Cardiac septum (tissue), 1 donor: ENCODE measurements at regions of chr7 and their contacts with region 1.

Region 1: GRCh38 chr7:29806208-29806994 is at the start of gene WIPF3:
- DNase-seq: no peak
- total RNA-seq, gene WIPF3: 11.6 TPM

Region 2: DNA sequence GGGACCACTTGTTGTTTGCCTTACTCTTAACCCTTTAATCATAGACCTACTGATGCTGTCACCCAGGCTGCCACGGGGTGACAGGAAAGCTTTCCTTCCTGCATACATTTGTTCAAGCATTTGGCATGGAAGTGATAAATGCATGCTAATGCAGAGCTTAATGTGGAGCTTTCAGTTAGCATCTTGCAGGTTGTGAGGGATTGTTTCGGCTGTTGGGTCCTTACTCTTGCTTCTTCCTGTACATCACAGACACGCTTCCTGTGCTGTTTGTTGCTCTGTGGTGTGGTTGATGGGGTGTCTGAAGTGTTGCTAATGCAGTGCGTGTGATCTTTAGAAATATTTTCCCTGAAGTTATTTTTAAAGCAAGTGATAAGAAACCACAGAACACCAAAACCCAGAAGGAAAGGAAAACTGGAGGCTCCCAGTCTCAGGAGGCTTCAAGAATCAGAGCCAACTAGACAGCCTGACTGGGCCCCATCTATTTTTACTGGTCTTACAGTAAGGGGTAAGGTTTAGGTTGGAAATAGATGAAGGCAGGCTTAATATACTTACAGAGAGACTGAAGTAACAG is 468.8 kb before region 1 on chr7:
- intact Hi-C with region 1: no loop called
- DNase-seq: no peak

Region 3: DNA sequence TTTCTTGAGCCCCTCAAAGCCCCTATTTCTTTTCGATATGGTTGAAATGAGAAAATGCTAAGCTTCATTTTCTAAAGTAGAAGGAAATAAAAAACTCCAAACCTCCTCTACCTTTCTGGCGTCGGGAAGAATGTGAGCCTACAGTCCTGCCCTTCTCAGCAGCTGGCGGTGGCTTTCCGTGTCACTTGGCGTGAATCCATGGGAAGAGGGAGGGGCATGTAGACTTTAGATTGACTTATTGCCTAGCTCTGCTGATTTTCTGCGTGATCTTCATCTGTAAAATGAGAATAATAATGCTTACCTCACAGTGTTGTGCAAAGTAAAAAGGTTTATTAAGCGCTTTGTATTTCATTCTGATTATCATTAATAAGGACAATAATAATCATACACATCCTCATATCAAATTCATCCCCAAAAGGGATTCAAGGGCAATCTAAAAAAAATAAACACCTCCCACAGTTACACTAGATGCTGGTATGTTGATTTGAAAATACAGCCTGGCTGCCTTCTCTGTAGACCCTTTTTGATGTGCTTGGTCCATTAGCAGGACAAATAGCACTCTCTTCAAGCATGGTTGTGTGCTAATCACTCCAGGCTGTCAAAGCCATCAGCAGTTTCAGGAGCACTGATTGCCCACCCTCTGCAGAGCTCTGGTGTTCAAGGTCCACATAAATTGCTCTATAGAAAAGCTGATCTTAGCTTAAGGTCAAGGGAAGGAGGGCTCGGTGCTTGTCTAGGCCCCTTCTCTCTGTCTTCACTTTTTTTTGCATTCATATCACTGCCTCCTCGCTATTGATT is 207.6 kb before region 1 on chr7:
- intact Hi-C with region 1: no loop called
- DNase-seq: no peak

Region 4: GRCh38 chr7:29764227-29764626 is 42.2 kb before region 1 on chr7:
- intact Hi-C with region 1: no loop called
- DNase-seq: no peak

Region 5: GRCh38 chr7:29843093-29843492 is 36.7 kb after region 1 on chr7:
- intact Hi-C with region 1: no loop called
- DNase-seq: no peak

Region 6: DNA sequence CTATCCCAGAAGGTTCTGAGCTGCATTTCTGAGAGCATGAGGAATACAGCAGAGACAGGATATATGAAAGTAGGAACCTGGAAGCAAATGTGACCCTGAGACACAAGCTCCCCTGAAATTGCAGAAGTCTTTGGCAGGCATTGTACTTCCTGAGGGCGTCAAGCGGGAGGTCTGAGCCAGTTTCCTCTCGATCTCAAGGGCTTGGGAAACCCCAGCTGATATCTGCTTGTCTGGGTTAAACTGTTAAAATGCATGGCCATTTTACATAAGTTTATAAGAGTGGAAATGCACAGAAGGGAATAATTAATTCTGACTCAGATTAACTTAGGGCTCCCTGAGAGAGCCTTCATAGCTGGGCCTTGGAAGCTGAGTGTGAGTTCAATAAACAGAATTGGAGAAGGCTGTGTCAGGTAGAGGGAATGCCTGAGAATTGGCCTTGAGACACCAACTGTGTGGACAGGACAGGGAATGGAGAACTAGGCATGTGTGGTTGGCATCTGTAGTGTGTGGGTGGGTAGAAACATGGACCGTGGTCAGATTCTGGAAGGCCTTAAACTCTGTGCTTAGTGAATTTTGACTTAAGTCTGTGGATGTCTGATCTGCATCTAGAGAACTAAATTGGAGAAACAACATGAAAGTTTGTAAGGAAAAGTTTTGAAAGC is 53.3 kb after region 1 on chr7:
- intact Hi-C with region 1: loop called (anchors 5 kb)
- DNase-seq: no peak